ENCODE measurements at regions of chr14 and their contacts with region 1.

Region 1: DNA sequence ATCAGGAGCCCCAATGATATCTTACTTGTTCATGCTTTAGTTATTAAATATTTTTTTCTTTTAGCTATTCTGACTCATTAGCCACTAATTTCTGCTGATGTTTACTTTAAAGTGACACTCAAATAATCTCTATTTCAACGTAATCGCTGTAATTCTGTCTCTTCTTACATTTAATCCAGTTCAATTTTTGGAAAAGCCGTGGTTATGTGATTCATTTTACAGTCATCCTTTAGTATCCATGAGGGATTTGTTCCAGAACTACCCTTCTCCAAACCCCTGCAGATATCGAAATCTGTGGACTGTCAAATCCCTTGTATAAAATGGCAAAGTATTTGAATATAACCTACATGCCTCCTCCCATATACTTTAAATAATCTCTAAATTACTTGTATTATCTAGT is 1103.4 kb downstream of the LRFN5 start:
- DNase-seq: no peak
- H3K4me3 ChIP-seq: no peak overlapping the region
- H3K27ac ChIP-seq: no peak overlapping the region
- H3K4me1 ChIP-seq: no peaks in the 10 kb centered on the region
- H3K27me3 ChIP-seq: no peaks in the 10 kb centered on the region
- CTCF ChIP-seq: no peak
- POLR2A ChIP-seq: no peak

Region 2: DNA sequence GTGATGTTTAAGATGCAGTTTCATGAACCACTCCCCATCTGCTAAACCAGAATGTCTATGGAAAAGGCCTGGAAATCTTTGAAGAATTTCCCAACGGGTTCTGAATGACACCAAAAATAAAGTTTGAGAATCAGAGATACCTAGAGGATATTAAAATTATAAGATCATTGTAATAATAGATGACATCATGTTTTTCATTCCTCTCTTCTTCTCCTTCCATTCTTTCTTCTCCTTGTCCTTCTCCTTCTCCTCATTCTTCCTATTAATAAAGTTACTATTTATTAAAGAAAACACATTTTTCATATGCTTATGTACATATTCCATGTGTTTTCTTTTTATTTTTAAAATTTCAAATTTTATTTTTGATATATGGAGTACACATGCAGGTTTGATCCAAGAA is 346.0 kb after region 1 on chr14:
- intact Hi-C with region 1: loop called (anchors 5 kb)
- DNase-seq: no peak
- H3K4me3 ChIP-seq: no peak overlapping the region
- H3K27ac ChIP-seq: no peak overlapping the region
- H3K4me1 ChIP-seq: no peaks in the 10 kb centered on the region
- H3K27me3 ChIP-seq: no peaks in the 10 kb centered on the region
- CTCF ChIP-seq: no peak
- POLR2A ChIP-seq: no peak

Measured in breast epithelium (tissue), 4 donors.